CD4-positive, alpha-beta T cell (primary cell): ENCODE measurements at regions of chr6 and their contacts with region 1.

Region 1: GRCh38 chr6:167409694-167410093 is 84.8 kb downstream of the TTLL2 start:
- DNase-seq: no peak
- ATAC-seq: no peak
- H3K4me3 ChIP-seq: no peak overlapping the region
- H3K4me3 Mint-ChIP-seq: no peak overlapping the region
- H3K27ac ChIP-seq: no peak overlapping the region
- H3K27ac Mint-ChIP-seq: no peak overlapping the region
- H3K4me1 ChIP-seq: no peaks in the 10 kb centered on the region
- H3K4me1 Mint-ChIP-seq: no peaks in the 10 kb centered on the region
- H3K27me3 ChIP-seq: peaks cover 0 to 4% of the 10 kb centered on the region in 2 experiments
- H3K27me3 Mint-ChIP-seq: peaks cover 12% of the 10 kb centered on the region
- CTCF ChIP-seq: no peak

Region 2: GRCh38 chr6:167247814-167248595 is 161.7 kb before region 1 on chr6:
- CTCF ChIA-PET with region 1: no interaction called
- POLR2A ChIA-PET with region 1: no interaction called
- intact Hi-C with region 1: loop called in 1 of 2 experiments (anchors 5 kb)
- DNase-seq: no peak
- ATAC-seq: no peak
- H3K4me3 ChIP-seq: no peak overlapping the region
- H3K4me3 Mint-ChIP-seq: no peak overlapping the region
- H3K27ac ChIP-seq: no peak overlapping the region
- H3K27ac Mint-ChIP-seq: no peak overlapping the region
- H3K4me1 ChIP-seq: no peaks in the 10 kb centered on the region
- H3K4me1 Mint-ChIP-seq: no peaks in the 10 kb centered on the region
- H3K27me3 ChIP-seq: peaks cover 0 to 3% of the 10 kb centered on the region in 2 experiments
- H3K27me3 Mint-ChIP-seq: peaks cover 6% of the 10 kb centered on the region
- CTCF ChIP-seq: no peak

Region 3: DNA sequence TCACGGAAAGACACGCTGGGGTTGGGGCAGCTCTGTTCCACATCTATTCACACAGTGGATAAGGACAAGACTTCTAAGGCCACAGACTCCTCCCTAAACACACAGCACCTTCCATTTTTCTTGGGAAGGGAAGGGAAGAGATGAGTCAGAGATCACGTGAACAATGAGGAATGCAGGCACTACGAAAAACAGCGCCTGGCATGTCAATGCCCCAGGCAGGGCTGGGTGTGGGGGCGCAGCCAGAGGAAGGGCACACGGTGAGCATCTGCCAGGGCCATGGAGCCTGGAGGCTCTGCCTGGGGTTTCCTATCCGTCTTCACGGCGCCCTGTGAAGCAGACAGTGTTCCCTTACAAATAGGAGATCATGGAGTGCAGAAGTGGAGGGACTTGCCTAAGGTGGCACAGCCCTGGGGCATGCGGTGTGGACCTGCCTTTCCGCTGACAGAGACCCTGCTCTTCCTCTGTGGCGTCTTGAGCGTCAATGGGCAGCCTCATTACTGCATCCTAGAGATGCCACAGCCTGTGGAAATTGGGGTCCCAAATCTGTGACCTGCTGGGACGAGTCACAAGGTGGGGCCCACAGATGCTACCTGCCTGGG is 103.2 kb before region 1 on chr6:
- CTCF ChIA-PET with region 1: no interaction called
- POLR2A ChIA-PET with region 1: no interaction called
- intact Hi-C with region 1: no loop called
- DNase-seq: no peak
- ATAC-seq: no peak
- H3K4me3 ChIP-seq: no peak overlapping the region
- H3K4me3 Mint-ChIP-seq: no peak overlapping the region
- H3K27ac ChIP-seq: no peak overlapping the region
- H3K27ac Mint-ChIP-seq: no peak overlapping the region
- H3K4me1 ChIP-seq: no peaks in the 10 kb centered on the region
- H3K4me1 Mint-ChIP-seq: no peaks in the 10 kb centered on the region
- H3K27me3 ChIP-seq: no peaks in the 10 kb centered on the region
- H3K27me3 Mint-ChIP-seq: peaks cover 12% of the 10 kb centered on the region
- CTCF ChIP-seq: no peak